Mammary epithelial cell (primary cell): ENCODE measurements at regions of chr5 and their contacts with region 1.

Region 1: GRCh38 chr5:145237843-145238242 is 597.3 kb downstream of the PRELID2 start:
- DNase-seq: peak; percentile 45
- H3K4me3 ChIP-seq: no peak overlapping the region
- H3K27ac ChIP-seq: no peak overlapping the region
- H3K4me1 ChIP-seq: no peaks in the 10 kb centered on the region
- H3K27me3 ChIP-seq: no peaks in the 10 kb centered on the region
- CTCF ChIP-seq: peak; percentile 74

Region 2: GRCh38 chr5:144390133-144390532 is 847.7 kb before region 1 on chr5:
- CTCF ChIA-PET with region 1: no interaction called
- dilution Hi-C with region 1: no loop called
- in situ Hi-C with region 1: no loop called
- intact Hi-C with region 1: loop called (anchors 1 kb)
- DNase-seq: peak; percentile 6
- H3K4me3 ChIP-seq: no peak overlapping the region
- H3K27ac ChIP-seq: no peak overlapping the region
- H3K4me1 ChIP-seq: no peaks in the 10 kb centered on the region
- H3K27me3 ChIP-seq: peaks cover 2% of the 10 kb centered on the region
- CTCF ChIP-seq: peak; percentile 38 to 58

Region 3: DNA sequence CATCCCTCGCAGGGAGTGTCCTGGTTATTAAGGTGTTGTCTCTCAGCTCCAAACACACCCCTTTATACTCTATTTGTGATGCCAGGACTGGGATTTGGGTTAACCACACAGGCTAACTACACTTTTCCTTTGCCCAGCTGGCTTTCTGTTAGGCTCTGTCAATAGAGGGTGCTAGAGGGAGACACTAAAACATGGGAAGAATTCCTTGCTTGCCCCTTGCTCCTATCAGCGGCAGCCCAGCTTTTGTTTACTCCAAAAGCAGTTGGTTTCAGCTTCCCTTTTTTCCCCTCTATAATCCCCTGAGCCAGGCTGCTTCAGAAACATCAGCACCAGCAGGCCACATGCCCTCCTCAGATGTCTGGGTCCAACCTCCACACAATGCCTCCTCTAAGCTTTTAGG is 770.1 kb before region 1 on chr5:
- CTCF ChIA-PET with region 1: no interaction called
- dilution Hi-C with region 1: no loop called
- in situ Hi-C with region 1: no loop called
- intact Hi-C with region 1: loop called (anchors 1 kb)
- DNase-seq: peak; percentile 25
- H3K4me3 ChIP-seq: no peak overlapping the region
- H3K27ac ChIP-seq: no peak overlapping the region
- H3K4me1 ChIP-seq: no peaks in the 10 kb centered on the region
- H3K27me3 ChIP-seq: no peaks in the 10 kb centered on the region
- CTCF ChIP-seq: peak; percentile 66 to 84

Region 4: DNA sequence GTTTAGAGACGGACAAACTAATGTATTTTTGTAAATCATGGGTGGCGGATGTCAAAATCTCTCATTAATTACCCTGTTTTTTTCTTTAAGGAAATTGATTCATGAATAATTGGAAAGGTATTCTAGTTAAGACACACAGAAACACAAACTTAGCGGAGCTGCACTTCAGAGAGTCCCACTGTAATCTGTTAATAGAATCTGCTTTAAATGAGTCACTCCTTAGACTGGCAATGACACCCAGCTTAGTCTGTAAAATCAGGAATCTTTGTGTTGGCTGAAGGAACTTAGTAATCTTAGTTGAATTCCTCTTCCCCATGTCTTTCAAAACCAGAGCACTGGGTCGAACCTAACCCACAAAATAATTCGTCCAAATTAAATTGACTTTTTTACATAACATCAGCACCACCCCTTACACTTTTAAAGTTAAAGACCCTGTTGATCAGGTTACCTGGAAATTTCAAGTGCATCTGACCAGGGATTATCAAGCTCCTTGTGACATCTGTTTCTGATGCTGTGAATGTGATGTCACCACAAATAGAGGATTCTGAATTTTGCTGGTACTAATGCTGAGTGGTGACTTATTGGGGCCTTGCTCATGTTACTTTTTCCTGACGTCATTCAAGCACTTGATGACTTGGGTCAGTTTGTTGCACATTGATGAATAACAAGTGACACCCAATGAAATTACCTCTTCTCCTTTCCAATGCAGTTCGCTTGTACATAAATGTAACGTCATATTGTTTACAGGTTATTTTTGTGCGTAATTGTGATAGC is 753.5 kb before region 1 on chr5:
- CTCF ChIA-PET with region 1: no interaction called
- dilution Hi-C with region 1: no loop called
- in situ Hi-C with region 1: no loop called
- intact Hi-C with region 1: loop called (anchors 1 kb)
- DNase-seq: peak; percentile 32
- H3K4me3 ChIP-seq: no peak overlapping the region
- H3K27ac ChIP-seq: no peak overlapping the region
- H3K4me1 ChIP-seq: no peaks in the 10 kb centered on the region
- H3K27me3 ChIP-seq: peaks cover 3% of the 10 kb centered on the region
- CTCF ChIP-seq: no peak

Region 5: DNA sequence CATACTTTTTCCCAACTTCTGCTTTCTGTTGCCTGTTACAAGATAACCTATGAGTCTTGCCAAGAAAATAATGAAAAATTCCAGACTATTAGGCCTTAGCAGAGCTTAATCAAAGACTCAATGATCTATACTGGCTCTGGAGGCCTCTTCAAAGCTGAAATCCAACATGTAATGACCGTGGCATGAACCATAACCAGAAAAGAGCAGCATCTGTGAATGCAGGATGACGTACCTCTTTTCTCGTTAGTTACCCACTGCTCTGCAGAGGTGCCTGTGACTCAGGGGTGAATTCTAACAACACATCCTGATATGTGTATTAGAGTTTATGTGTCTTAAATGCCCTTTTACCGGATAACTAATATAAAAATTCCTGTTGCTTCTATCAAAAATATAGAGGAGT is 48.1 kb before region 1 on chr5:
- CTCF ChIA-PET with region 1: no interaction called
- dilution Hi-C with region 1: no loop called
- in situ Hi-C with region 1: no loop called
- intact Hi-C with region 1: no loop called
- DNase-seq: no peak
- H3K4me3 ChIP-seq: no peak overlapping the region
- H3K27ac ChIP-seq: no peak overlapping the region
- H3K4me1 ChIP-seq: no peaks in the 10 kb centered on the region
- H3K27me3 ChIP-seq: no peaks in the 10 kb centered on the region
- CTCF ChIP-seq: no peak